ENCODE measurements at regions of chr20 and their contacts with region 1.

Region 1: DNA sequence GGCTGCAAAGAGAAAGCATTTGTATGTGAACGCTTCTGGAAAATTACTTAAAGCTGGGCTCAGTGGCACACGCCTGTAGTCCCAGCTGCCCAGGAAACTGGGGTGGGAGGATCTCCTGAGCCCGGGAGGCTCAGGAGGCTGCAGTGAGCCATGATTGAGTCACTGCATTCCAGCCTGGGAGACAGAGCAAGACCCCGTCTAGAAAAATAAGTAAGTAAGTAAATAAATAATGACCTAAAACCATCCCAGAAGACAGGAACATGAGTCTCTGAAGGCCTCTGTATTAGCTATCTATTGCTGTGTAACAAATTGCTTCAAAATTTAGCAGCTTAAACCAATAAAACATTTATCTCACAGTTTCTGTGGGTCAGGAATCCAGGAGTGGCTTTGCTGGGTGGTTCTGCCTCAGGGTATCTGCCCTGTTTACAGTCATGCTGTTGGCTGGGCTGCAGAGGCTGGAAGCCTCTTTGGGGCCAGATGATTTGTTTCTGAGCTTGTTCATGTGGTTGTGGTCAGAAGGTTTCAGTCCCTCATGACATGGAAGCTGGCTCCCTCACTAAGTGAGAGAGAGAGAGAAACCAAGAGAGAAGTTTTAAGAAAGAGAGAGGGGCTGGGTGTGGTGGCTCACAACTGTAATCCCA is 48.4 kb upstream of the NCOA3 start:
- DNase-seq: peak; percentile 62
- H3K4me3 Mint-ChIP-seq: no peak overlapping the region
- H3K27ac Mint-ChIP-seq: peak overlapping the region; percentile 51
- H3K4me1 Mint-ChIP-seq: peaks cover 45% of the 10 kb centered on the region
- H3K27me3 Mint-ChIP-seq: no peaks in the 10 kb centered on the region

Region 2: DNA sequence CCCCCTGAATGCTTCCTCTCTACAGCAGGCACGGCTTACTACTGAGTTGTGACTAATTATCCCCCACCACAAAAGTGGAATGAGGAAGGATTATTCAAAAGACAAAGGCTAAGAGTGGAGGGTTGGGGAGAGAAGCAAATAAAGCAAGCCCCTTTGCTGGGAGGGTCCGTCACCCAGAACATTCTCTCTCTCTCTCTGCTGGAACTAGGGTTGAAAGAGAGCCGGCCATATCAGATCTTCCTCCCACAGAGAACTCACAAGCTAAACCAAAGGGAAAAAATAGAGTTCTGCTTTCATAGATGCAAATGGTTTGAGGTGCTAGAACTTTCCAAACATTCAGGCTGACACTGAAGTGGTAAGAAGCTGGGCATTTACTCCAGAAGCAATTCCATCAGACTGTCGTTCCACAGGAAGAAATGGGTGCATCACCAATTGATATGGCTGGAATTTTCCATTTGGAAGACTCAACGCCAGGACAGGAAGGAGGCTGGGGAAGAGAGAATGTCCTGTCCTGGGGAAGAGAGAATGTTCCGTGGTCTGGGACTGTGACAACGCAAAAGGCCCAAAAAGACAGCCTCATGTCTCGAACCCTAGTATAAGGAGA is 104.6 kb before region 1 on chr20:
- CTCF ChIA-PET with region 1: no interaction called
- intact Hi-C with region 1: loop called (anchors 1 kb)
- DNase-seq: no peak
- H3K4me3 Mint-ChIP-seq: no peak overlapping the region
- H3K27ac Mint-ChIP-seq: no peak overlapping the region
- H3K4me1 Mint-ChIP-seq: peaks cover 12% of the 10 kb centered on the region
- H3K27me3 Mint-ChIP-seq: no peaks in the 10 kb centered on the region

Region 3: GRCh38 chr20:47356526-47357295 is 96.6 kb before region 1 on chr20 and contains the start of gene ZMYND8:
- CTCF ChIA-PET with region 1: no interaction called
- intact Hi-C with region 1: loop called (anchors 2 kb)
- DNase-seq: peak; percentile 97
- H3K4me3 Mint-ChIP-seq: peak within 1 kb of the TSS; percentile 92
- H3K27ac Mint-ChIP-seq: peak within 1 kb of the TSS; percentile 99
- H3K4me1 Mint-ChIP-seq: peaks cover 52% of the 10 kb centered on the region
- H3K27me3 Mint-ChIP-seq: no peaks in the 10 kb centered on the region
- total RNA-seq, gene ZMYND8: 30.3 to 33.0 TPM

Region 4: GRCh38 chr20:47418061-47418912 is 35.0 kb before region 1 on chr20:
- CTCF ChIA-PET with region 1: no interaction called
- intact Hi-C with region 1: loop called (anchors 5 kb)
- DNase-seq: no peak
- H3K4me3 Mint-ChIP-seq: no peak overlapping the region
- H3K27ac Mint-ChIP-seq: no peak overlapping the region
- H3K4me1 Mint-ChIP-seq: peaks cover 22% of the 10 kb centered on the region
- H3K27me3 Mint-ChIP-seq: no peaks in the 10 kb centered on the region

Region 5: GRCh38 chr20:47610247-47610944 is 157.1 kb after region 1 on chr20:
- CTCF ChIA-PET with region 1: interaction called, 5 read pairs
- intact Hi-C with region 1: loop called (anchors 1 kb)
- DNase-seq: peak; percentile 97
- H3K4me3 Mint-ChIP-seq: peak overlapping the region; percentile 48
- H3K27ac Mint-ChIP-seq: peak overlapping the region; percentile 96
- H3K4me1 Mint-ChIP-seq: peaks cover 86% of the 10 kb centered on the region
- H3K27me3 Mint-ChIP-seq: no peaks in the 10 kb centered on the region

Region 6: DNA sequence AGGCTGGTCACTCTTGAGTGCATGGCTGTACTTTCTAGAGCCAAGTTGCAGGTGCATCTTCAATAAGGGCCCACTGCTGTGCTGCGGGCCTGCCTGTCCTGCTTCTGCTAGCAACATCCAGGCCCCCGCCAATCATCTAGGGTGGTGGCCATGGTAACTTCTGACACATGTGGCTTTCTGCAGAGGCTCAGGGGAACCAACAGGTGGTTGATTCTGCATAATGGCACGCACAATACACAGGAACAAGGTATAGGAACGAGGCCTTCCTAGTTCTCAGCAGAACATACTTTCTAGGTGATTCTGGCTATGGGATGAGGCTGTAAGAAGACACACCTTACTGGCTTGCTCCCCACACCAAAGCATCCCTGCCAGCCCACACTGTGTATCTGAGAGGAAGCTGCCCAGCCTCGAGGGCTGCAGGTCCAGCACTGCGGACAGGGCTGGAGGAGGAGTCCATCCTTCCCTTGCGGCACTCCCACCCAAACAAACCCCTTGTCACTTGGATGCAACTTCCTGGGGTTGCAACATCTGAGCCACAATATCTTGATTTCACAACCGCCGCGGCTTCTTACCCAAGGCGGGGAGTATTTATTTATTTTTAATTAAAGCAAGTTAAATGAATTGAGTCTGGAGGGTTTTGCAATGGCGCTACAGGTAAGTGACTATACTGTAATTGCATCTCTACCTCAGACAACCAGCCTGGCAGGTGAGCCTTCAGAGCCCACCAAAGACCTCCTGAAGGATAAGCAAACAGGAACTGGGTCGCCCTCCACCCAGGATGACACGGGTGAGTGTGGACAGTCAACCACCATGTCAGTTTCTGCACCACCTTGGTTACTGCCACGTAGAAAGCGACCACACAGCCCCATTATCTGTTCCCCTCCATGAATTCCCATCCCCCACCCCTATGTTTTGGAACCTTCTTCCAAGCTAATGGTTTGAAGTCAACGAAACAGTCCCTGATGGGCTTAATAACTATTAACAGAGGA is 282.4 kb after region 1 on chr20:
- CTCF ChIA-PET with region 1: no interaction called
- intact Hi-C with region 1: no loop called
- DNase-seq: no peak
- H3K4me3 Mint-ChIP-seq: no peak overlapping the region
- H3K27ac Mint-ChIP-seq: no peak overlapping the region
- H3K4me1 Mint-ChIP-seq: no peaks in the 10 kb centered on the region
- H3K27me3 Mint-ChIP-seq: no peaks in the 10 kb centered on the region

Measured in activated naive CD4-positive, alpha-beta T cell treated with anti-CD3 and anti-CD28 coated beads for 36 hours (primary cell).